K562 (cell line): ENCODE measurements at regions of chr19 and their contacts with region 1.

Region 1: GRCh38 chr19:43446746-43447489 is 18.5 kb downstream of the LYPD3 start:
- DNase-seq: peak; percentile 78 to 84 (median 78)
- ATAC-seq: peak; percentile 90
- H3K4me3 ChIP-seq: no peak overlapping the region
- H3K27ac ChIP-seq: no peak overlapping the region
- H3K4me1 ChIP-seq: peaks cover 3 to 10% of the 10 kb centered on the region in 2 experiments; a peak in 4 of 5 replicates
- H3K27me3 ChIP-seq: no peaks in the 10 kb centered on the region
- CTCF ChIP-seq: peak; percentile 90 to 96 (median 94)
- EP300 ChIP-seq: no peak
- POLR2A ChIP-seq: no peak
- RAD21 ChIP-seq: peak; percentile 93 to 97

Region 2: GRCh38 chr19:43503501-43504425 is 56.8 kb after region 1 on chr19:
- CTCF ChIA-PET with region 1: interaction called, 3 read pairs
- POLR2A ChIA-PET with region 1: no interaction called
- in situ Hi-C with region 1: no loop called
- intact Hi-C with region 1: loop called (anchors 5 kb)
- DNase-seq: peak; percentile 97 to 99 (median 98)
- ATAC-seq: peak; percentile 97
- H3K4me3 ChIP-seq: peak overlapping the region; percentile 70
- H3K27ac ChIP-seq: peak overlapping the region; percentile 65
- H3K4me1 ChIP-seq: peaks cover 21 to 33% of the 10 kb centered on the region in 2 experiments
- H3K27me3 ChIP-seq: no peaks in the 10 kb centered on the region
- CTCF ChIP-seq: peak in 2 of 3 experiments; percentile 26 to 52; a peak in 2 of 6 replicates
- EP300 ChIP-seq: no peak
- POLR2A ChIP-seq: peak; percentile 72
- RAD21 ChIP-seq: no peak

Region 3: GRCh38 chr19:43519436-43520088 is 72.6 kb after region 1 on chr19:
- CTCF ChIA-PET with region 1: interaction called, 50 read pairs
- POLR2A ChIA-PET with region 1: interaction called, 19 read pairs
- in situ Hi-C with region 1: loop called (anchors 5 kb)
- intact Hi-C with region 1: loop called (anchors 1 kb)
- DNase-seq: peak; percentile 68 to 89 (median 70)
- ATAC-seq: peak; percentile 90
- H3K4me3 ChIP-seq: no peak overlapping the region
- H3K27ac ChIP-seq: no peak overlapping the region
- H3K4me1 ChIP-seq: peaks cover 0 to 5% of the 10 kb centered on the region in 2 experiments; a peak in 3 of 5 replicates
- H3K27me3 ChIP-seq: no peaks in the 10 kb centered on the region
- CTCF ChIP-seq: peak; percentile 88 to 95 (median 89)
- EP300 ChIP-seq: no peak
- POLR2A ChIP-seq: no peak
- RAD21 ChIP-seq: peak; percentile 91 to 97

Region 4: GRCh38 chr19:43619262-43620060 is 172.5 kb after region 1 on chr19 and contains the start of gene ZNF428:
- CTCF ChIA-PET with region 1: interaction called, 3 read pairs
- POLR2A ChIA-PET with region 1: no interaction called
- in situ Hi-C with region 1: no loop called
- intact Hi-C with region 1: loop called (anchors 10 kb)
- DNase-seq: peak; percentile 92 to 97 (median 92)
- ATAC-seq: peak; percentile 87
- H3K4me3 ChIP-seq: peak within 1 kb of the TSS; percentile 57
- H3K27ac ChIP-seq: peak within 1 kb of the TSS; percentile 99
- H3K4me1 ChIP-seq: peaks cover 47 to 66% of the 10 kb centered on the region in 2 experiments
- H3K27me3 ChIP-seq: no peaks in the 10 kb centered on the region
- CTCF ChIP-seq: no peak
- EP300 ChIP-seq: no peak
- POLR2A ChIP-seq: peak; percentile 92
- RAD21 ChIP-seq: no peak
- polyA plus RNA-seq, gene ZNF428: 0.15 to 0.23 TPM

Region 5: GRCh38 chr19:43651758-43652545 is 205.0 kb after region 1 on chr19:
- CTCF ChIA-PET with region 1: interaction called, 5 read pairs
- POLR2A ChIA-PET with region 1: interaction called, 3 read pairs
- in situ Hi-C with region 1: loop called (anchors 5 kb)
- intact Hi-C with region 1: loop called (anchors 10 kb)
- DNase-seq: peak; percentile 66 to 89 (median 76)
- ATAC-seq: peak; percentile 98
- H3K4me3 ChIP-seq: peak overlapping the region; percentile 34
- H3K27ac ChIP-seq: peak overlapping the region; percentile 56
- H3K4me1 ChIP-seq: peaks cover 0 to 3% of the 10 kb centered on the region in 2 experiments; a peak in 1 of 5 replicates
- H3K27me3 ChIP-seq: no peaks in the 10 kb centered on the region
- CTCF ChIP-seq: peak; percentile 89 to 95 (median 91)
- EP300 ChIP-seq: no peak
- POLR2A ChIP-seq: no peak
- RAD21 ChIP-seq: peak; percentile 67 to 87